PC-9 (cell line): ENCODE measurements at regions of chr19 and their contacts with region 1.

Region 1: DNA sequence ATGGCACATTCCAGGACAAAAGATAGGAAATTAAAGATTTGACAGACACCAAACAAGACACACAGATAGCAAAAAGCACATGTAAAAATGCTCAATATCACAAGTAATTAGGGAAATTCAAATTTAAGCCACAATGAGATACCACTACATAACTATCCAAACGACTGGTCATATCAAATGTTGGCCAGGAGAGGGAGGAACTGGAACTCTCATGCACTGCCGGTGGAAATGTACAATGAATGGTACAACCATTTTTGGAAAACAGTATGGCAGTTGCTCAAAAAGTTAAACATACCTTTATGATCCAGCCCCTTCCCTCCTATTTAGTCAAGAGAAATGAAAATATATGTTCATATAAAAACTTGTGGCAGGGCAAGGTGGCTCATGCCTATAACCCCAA is 36.8 kb upstream of the CYP2S1 start:
- DNase-seq: no peak
- H3K4me3 ChIP-seq: no peak overlapping the region
- H3K27ac ChIP-seq: no peak overlapping the region
- H3K4me1 ChIP-seq: peaks cover 11% of the 10 kb centered on the region
- H3K27me3 ChIP-seq: no peaks in the 10 kb centered on the region
- CTCF ChIP-seq: peak; percentile 34; the same call in 1 of the 2 replicates

Region 2: GRCh38 chr19:41114132-41114531 is 42.1 kb before region 1 on chr19 and contains the start of gene CYP2F1:
- CTCF ChIA-PET with region 1: interaction called, 4 read pairs
- POLR2A ChIA-PET with region 1: interaction called, 11 read pairs
- intact Hi-C with region 1: no loop called
- DNase-seq: no peak
- H3K4me3 ChIP-seq: no peak within 1 kb of the TSS
- H3K27ac ChIP-seq: no peak within 1 kb of the TSS
- H3K4me1 ChIP-seq: peaks cover 4% of the 10 kb centered on the region; the same call in 1 of the 2 replicates
- H3K27me3 ChIP-seq: 0 out of 2 replicates have a peak, but pooled peaks cover 3% of the 10 kb centered on the region
- CTCF ChIP-seq: no peak
- total RNA-seq, gene CYP2F1: not detected in 2 replicates

Region 3: DNA sequence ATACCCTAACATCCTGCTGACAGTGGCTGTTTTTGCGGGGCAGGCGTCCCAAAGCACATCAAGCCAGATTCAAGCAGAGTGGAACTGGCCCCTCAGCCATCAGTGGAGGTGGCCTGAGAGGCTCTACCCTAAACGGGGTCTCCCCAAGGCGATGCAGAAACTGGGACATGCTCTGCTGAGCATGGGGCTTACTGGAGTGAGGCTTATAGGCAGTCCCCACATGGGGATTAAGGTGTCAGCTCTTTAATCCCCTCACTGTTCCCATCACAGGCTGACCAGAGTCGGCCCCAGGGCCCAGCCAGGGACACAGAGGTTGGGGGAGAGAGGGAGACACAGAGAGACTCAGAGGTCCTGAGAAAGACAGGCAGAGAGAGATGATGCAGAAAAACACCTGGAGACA is 25.0 kb before region 1 on chr19:
- CTCF ChIA-PET with region 1: no interaction called
- POLR2A ChIA-PET with region 1: no interaction called
- intact Hi-C with region 1: no loop called
- DNase-seq: no peak
- H3K4me3 ChIP-seq: no peak overlapping the region
- H3K27ac ChIP-seq: no peak overlapping the region
- H3K4me1 ChIP-seq: peaks cover 5% of the 10 kb centered on the region; the same call in 1 of the 2 replicates
- H3K27me3 ChIP-seq: peaks cover 3% of the 10 kb centered on the region
- CTCF ChIP-seq: no peak

Region 4: DNA sequence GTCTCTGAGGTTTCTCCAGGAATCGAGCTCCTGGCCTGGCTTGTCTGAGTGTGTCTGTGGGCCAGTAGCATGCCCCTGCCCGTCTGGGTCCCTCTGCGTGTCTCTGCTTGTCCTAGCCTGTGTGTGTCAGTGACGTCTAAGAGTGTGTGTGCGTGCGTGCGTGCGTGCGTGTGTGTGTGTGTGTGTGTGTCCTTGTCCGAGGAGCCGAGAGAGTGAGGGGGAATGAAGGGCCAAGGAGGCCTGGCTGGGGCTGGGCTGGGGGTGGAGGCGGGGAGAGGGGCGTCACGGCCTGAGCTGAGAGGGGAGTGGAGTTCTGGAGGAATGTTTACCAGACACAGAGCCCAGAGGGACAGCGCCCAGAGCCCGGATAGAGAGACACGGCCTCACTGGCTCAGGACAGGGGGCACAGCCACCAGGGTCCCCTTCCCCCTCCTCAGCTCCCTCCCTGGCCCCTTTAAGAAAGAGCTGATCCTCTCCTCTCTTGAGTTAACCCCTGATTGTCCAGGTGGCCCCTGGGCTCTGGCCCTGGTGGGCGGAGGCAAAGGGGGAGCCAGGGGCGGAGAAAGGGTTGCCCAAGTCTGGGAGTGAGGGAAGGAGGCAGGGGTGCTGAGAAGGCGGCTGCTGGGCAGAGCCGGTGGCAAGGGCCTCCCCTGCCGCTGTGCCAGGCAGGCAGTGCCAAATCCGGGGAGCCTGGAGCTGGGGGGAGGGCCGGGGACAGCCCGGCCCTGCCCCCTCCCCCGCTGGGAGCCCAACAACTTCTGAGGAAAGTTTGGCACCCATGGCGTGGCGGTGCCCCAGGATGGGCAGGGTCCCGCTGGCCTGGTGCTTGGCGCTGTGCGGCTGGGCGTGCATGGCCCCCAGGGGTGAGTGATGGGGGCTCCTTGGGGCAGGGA is 62.7 kb after region 1 on chr19 and contains the start of gene AXL:
- CTCF ChIA-PET with region 1: no interaction called
- POLR2A ChIA-PET with region 1: interaction called, 11 read pairs
- intact Hi-C with region 1: no loop called
- DNase-seq: peak in 1 of 2 experiments; percentile 87
- H3K4me3 ChIP-seq: peak within 1 kb of the TSS; percentile 68
- H3K27ac ChIP-seq: no peak within 1 kb of the TSS
- H3K4me1 ChIP-seq: peaks cover 25% of the 10 kb centered on the region
- H3K27me3 ChIP-seq: no peaks in the 10 kb centered on the region
- CTCF ChIP-seq: no peak
- total RNA-seq, gene AXL: 236 and 271 TPM in 2 replicates

Region 5: DNA sequence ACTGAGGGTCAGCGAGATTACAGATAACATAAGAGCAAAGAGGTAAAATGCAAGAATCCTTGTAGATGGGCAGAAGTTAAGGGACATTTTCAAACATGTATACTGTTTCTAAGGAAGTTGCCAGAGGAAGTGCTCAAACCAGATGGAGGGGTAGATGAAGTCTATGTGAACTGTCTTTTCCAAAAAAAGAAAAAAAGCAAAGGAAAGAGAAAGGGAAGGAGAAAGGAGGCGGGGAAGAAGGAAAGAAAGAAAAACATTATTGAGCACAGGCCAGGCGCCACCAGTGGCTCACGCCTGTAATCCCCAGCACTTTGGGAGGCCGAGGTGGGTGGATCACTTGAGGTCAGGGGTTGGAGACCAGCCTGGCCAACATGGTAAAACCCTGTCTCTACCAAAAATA is 278.2 kb after region 1 on chr19:
- CTCF ChIA-PET with region 1: interaction called, 12 read pairs
- POLR2A ChIA-PET with region 1: no interaction called
- intact Hi-C with region 1: no loop called
- DNase-seq: no peak
- H3K4me3 ChIP-seq: no peak overlapping the region
- H3K27ac ChIP-seq: no peak overlapping the region
- H3K4me1 ChIP-seq: peaks cover 7% of the 10 kb centered on the region; the same call in 1 of the 2 replicates
- H3K27me3 ChIP-seq: no peaks in the 10 kb centered on the region
- CTCF ChIP-seq: no peak